ENCODE measurements at regions of chr9 and their contacts with region 1.

Region 1: DNA sequence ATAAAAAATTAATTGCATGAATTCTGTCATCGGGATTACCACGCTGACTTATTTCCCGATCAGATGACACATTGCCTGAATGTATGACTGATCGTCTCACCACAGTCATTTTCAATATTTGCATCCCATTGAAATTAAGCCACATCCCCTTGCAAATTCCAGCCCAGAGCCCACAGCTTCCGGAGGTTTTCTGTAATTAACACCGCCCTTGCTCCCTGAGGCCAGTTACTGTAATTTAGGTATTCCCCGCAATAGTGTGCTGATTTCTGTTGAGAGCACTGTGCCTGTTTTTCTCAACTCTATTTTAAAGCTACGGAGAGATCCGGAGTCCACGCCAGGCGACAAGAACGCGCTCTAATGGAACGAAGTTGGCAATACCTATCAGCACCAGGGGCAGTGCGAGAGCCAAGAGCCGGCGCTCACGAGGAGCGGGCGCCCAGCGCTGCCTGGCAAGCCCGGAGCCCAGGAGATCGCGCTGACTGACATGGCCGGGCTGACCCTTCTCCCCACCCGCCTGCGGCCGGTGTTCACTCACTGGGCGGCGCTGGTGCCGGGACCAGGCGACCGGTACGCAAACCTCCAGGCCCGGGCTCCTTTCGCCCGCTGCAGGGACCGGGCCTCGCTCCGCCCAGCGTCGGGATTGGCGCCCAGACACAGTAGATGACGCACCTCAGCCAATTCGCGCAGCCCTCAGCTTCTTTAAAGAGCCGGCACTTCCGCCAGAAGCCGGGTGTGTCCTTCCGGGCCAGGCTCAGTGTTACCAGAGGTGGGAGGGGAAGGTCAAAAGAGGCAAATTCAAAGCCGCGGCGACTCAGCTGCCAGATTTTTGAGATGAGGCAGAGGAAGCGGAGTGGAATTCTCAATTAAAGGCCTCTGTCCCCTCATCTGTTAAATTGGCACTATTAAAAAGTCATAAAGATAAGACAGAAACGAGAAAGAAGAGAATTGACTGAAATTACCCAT is at the start of gene PLGRKT:
- DNase-seq: peak; percentile 95
- H3K4me3 Mint-ChIP-seq: peak within 1 kb of the TSS; percentile 85
- H3K27ac Mint-ChIP-seq: peak within 1 kb of the TSS; percentile 85
- H3K4me1 Mint-ChIP-seq: no peaks in the 10 kb centered on the region
- H3K27me3 Mint-ChIP-seq: no peaks in the 10 kb centered on the region
- CTCF ChIP-seq: no peak
- total RNA-seq, gene PLGRKT: 21.6 and 22.5 TPM in 2 replicates

Region 2: DNA sequence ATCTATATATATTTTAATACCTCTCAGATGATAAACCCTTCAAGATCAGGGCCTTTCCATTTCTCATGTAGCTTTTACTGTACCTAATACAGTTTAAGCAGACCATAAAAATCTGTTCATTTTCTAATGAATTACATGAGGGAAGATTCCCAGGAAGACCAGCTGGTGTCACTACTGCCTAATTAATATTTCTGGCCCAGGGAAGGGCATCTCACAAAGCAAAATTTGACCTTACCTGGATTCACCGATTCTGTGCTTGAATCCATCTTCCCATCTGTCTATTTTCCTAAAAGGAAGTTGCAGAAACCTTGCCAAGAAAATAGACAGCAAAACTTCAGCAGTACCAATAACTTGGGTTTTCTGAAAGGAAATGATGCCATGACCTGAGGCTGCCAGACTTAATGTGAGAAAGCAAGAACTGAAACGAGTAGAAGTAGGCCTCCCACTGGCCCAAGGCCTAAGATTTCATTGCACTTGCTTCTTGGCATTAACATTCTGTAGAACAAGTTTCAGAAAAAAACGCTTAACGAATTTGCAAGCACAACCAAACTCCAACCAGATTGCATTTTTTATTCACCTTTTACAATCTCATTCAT is 1054.7 kb before region 1 on chr9:
- CTCF ChIA-PET with region 1: no interaction called
- POLR2A ChIA-PET with region 1: no interaction called
- intact Hi-C with region 1: loop called (anchors 5 kb)
- DNase-seq: peak; percentile 53
- H3K4me3 Mint-ChIP-seq: no peak overlapping the region
- H3K27ac Mint-ChIP-seq: no peak overlapping the region
- H3K4me1 Mint-ChIP-seq: no peaks in the 10 kb centered on the region
- H3K27me3 Mint-ChIP-seq: no peaks in the 10 kb centered on the region
- CTCF ChIP-seq: peak; percentile 41

Region 3: DNA sequence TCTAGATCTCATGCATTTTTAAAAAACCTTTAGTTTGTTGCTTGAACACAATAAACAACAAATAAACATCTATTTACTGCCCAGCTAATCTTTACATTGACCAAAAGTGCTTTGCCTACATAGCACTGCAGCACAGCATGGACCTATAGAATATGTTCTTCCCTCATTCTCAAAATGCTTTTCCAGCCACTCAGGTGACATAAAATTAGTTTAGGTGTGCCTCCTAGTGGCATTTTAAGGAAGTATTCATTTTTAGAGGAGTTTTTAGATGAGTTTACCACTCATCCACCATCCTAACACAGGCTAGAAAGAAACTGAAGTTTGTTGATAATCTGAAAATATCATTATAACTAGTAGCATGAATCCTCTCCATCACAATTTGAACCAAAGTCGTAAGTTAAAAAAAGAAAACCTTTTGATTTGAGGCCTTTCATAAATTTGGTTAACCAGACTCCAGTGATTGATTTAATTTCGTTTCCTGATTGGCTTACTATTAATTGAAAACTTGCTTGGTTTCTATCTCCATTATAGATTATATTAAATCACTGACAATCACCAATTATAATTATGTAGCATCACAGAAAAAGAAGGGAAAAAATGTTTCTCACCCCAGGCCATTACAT is 12.4 kb before region 1 on chr9:
- CTCF ChIA-PET with region 1: interaction called, 10 read pairs
- POLR2A ChIA-PET with region 1: interaction called, 3 read pairs
- intact Hi-C with region 1: no loop called
- DNase-seq: peak; percentile 44
- H3K4me3 Mint-ChIP-seq: no peak overlapping the region
- H3K27ac Mint-ChIP-seq: no peak overlapping the region
- H3K4me1 Mint-ChIP-seq: no peaks in the 10 kb centered on the region
- H3K27me3 Mint-ChIP-seq: no peaks in the 10 kb centered on the region
- CTCF ChIP-seq: peak; percentile 51

Region 4: DNA sequence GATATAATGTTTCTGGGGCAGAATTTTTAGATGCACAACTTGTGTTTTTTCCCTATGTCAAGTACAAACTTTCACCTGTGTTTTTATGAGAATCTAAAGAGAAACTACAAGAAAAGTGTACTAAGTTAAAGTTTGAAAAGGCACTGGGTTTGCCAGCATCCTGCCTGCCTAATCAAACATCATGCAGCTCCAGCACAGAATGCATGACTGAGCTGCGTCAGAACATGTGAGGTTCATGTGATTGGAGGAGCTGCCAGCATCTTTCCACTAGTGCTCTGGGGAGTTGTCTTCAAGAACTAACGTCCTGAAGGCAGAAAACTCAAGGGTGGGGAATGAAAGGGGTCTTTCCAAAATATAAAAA is 145.3 kb after region 1 on chr9:
- CTCF ChIA-PET with region 1: interaction called, 11 read pairs
- POLR2A ChIA-PET with region 1: interaction called, 4 read pairs
- intact Hi-C with region 1: no loop called
- DNase-seq: no peak
- H3K4me3 Mint-ChIP-seq: no peak overlapping the region
- H3K27ac Mint-ChIP-seq: no peak overlapping the region
- H3K4me1 Mint-ChIP-seq: no peaks in the 10 kb centered on the region
- H3K27me3 Mint-ChIP-seq: no peaks in the 10 kb centered on the region
- CTCF ChIP-seq: no peak

Region 5: DNA sequence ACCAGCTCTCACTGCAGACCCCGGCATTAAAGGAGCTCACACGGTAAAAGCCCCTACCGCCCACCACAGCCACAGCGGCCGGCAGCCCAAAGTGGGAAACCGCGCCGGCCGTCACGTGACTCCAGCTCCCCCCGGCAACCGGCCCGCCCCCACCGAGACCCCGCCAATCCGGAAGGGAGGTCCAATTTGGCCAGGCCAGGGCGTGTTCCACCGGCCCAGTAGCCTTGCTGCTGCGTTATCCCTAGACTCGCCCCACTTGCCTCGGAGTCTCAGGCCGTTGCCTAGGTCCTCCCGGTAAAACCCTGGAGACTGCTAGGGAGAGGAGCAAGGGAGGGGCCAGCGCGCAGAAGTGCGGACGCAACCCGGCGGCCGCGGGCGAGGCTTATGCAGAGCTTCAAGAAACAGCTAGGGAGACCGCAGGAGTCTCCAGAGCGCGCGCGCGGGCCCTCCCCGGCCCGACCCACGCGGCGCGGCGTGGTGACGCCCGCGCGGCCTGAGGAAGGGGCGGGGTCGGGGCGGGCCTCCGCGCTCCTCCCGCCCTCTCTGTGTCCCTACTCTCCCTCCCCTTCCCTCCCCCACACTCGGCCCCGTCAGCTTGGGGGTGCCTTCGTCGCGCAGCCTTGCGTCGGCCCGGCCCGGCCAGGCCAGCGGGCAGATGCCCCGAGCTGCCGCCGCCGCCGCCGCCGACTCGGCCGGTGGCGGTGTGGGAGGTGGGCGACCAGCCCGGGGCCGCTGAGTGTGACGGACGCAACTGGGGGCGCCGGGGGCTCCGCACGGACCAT is 191.2 kb after region 1 on chr9 and contains the start of gene RIC1:
- CTCF ChIA-PET with region 1: no interaction called
- POLR2A ChIA-PET with region 1: interaction called, 11 read pairs
- intact Hi-C with region 1: no loop called
- DNase-seq: peak; percentile 89
- H3K4me3 Mint-ChIP-seq: peak within 1 kb of the TSS; percentile 88
- H3K27ac Mint-ChIP-seq: peak within 1 kb of the TSS; percentile 92
- H3K4me1 Mint-ChIP-seq: peaks cover 20% of the 10 kb centered on the region
- H3K27me3 Mint-ChIP-seq: no peaks in the 10 kb centered on the region
- CTCF ChIP-seq: no peak
- total RNA-seq, gene RIC1: 21.3 and 23.1 TPM in 2 replicates

Region 6: DNA sequence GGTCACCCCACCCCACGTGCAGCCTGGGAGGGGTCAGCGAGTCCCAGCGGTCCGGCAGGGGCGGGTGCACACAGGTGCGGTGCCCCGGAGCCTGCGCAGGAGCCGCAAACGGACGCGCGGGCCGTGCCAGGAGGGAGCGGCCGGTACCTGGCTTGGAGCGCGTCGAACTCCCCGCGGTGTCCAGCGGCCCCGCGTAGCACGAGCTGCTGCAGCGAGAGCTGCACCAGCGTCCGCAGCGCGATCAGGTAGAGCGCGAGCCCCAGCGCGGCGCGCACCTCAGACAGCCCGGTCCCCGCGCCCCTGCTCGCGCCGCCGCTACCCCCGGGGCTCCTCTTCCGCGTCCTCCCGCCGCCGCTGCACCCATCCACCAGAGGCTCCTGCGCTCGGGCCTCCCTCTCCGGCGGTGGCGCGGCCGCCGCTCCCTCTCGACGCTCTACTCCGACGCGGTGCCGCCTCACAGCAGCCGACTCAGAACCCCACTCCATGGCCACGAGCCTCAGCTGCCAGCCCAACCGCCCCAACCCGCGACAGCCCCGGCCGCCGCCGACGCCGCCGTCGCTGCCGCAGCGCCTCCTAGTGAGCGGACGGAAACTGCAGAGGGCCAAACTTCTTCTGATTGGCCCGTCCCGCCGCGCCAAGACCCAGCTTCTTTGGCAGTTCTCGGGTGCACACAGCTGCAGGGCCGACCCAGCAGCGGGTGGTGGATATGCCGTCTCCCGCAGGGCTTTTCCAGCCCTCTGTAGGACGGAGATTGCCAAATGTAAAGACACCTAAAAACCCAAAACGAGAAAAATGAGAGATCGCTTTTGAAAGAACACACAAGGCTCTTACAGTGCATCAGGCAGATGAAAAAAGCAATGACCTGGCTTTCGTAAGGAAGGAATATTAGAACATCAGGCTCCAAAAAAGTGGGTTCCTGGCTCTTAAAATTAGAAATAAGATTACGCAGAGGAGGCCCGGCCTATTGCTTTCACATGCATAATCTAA is 395.3 kb after region 1 on chr9 and contains the start of gene ERMP1:
- CTCF ChIA-PET with region 1: no interaction called
- POLR2A ChIA-PET with region 1: no interaction called
- intact Hi-C with region 1: no loop called
- DNase-seq: peak; percentile 84
- H3K4me3 Mint-ChIP-seq: peak within 1 kb of the TSS; percentile 76
- H3K27ac Mint-ChIP-seq: no peak within 1 kb of the TSS
- H3K4me1 Mint-ChIP-seq: peaks cover 10% of the 10 kb centered on the region
- H3K27me3 Mint-ChIP-seq: no peaks in the 10 kb centered on the region
- CTCF ChIP-seq: peak; percentile 89
- total RNA-seq, gene ERMP1: 13.6 and 17.2 TPM in 2 replicates

Measured in MCF 10A (cell line).